ENCODE measurements at regions of chr3 and their contacts with region 1.

Region 1: DNA sequence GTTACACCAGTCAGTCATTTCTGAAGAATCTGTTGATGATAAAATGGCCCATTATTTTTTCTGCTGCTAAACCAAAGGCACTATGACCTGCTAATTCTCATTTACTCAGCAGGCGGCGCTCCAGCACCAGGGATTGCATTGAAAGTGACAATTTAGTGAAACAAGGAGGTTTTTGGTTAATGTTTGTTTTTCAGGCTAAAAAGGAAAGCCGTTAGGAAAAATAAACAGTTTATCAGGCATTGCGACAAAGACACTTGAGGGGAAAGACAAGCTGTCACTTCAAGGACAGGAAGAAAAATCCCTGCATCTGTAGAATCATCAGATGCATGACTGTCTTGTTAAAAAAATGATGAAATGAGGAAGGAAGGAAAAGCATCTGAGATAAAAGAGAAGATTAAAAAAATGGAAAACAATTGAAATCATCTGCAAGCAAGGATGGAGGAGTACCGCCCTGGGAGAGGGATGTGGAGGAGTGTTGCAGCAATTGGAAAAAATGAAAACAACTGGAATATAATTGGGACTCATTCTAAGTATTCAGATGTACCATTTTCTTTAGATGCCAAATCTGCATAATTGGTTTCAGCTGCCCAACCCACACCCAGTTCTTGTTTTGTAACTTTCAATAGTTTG is 54.0 kb downstream of the NR1D2 start:
- DNase-seq: peak; percentile 42
- ATAC-seq: peak; percentile 57; the same call in 1 of the 2 replicates
- H3K4me3 ChIP-seq: no peak overlapping the region
- H3K27ac ChIP-seq: no peak overlapping the region
- H3K4me1 ChIP-seq: peaks cover 7% of the 10 kb centered on the region; the same call in 1 of the 2 replicates
- H3K27me3 ChIP-seq: no peaks in the 10 kb centered on the region; the same call in none of the 2 replicates
- CTCF ChIP-seq: peak; percentile 98
- POLR2A ChIP-seq: peak; percentile 50
- RAD21 ChIP-seq: peak; percentile 100

Region 2: GRCh38 chr3:23888617-23889228 is 110.4 kb before region 1 on chr3:
- CTCF ChIA-PET with region 1: no interaction called
- POLR2A ChIA-PET with region 1: no interaction called
- dilution Hi-C with region 1: no loop called
- in situ Hi-C with region 1: no loop called
- intact Hi-C with region 1: loop called (anchors 1 kb)
- DNase-seq: peak; percentile 64
- ATAC-seq: peak; percentile 74
- H3K4me3 ChIP-seq: no peak overlapping the region
- H3K27ac ChIP-seq: no peak overlapping the region
- H3K4me1 ChIP-seq: no peaks in the 10 kb centered on the region
- H3K27me3 ChIP-seq: no peaks in the 10 kb centered on the region
- CTCF ChIP-seq: peak; percentile 77
- POLR2A ChIP-seq: no peak
- RAD21 ChIP-seq: peak; percentile 83

Region 3: GRCh38 chr3:24185738-24186384 is 186.7 kb after region 1 on chr3:
- CTCF ChIA-PET with region 1: no interaction called
- POLR2A ChIA-PET with region 1: no interaction called
- dilution Hi-C with region 1: no loop called
- in situ Hi-C with region 1: no loop called
- intact Hi-C with region 1: loop called (anchors 1 kb)
- DNase-seq: peak; percentile 57
- ATAC-seq: peak; percentile 81
- H3K4me3 ChIP-seq: no peak overlapping the region
- H3K27ac ChIP-seq: no peak overlapping the region
- H3K4me1 ChIP-seq: no peaks in the 10 kb centered on the region
- H3K27me3 ChIP-seq: peaks cover 5% of the 10 kb centered on the region
- CTCF ChIP-seq: peak; percentile 53
- POLR2A ChIP-seq: no peak
- RAD21 ChIP-seq: peak; percentile 51

Region 4: DNA sequence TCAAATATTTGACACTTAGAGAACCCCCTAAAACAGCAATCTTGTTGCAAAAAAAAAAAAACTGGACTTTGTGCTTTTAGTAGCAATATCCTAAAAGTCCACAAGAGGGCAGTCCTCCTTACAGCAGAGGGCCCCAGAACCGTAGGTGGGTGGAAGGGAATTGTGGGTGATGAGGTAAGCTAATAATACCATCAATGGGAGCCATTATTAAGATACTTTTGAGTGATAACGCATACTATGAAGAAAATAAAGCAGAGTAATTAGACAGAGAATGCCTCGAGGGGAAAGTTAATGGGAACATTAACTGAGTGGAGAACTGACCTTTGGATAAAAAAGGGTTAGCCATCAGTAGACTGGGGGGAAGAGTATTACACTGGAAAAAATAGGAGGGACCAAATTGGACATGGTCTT is 265.6 kb after region 1 on chr3:
- CTCF ChIA-PET with region 1: no interaction called
- POLR2A ChIA-PET with region 1: no interaction called
- dilution Hi-C with region 1: no loop called
- in situ Hi-C with region 1: no loop called
- intact Hi-C with region 1: loop called (anchors 1 kb)
- DNase-seq: peak; percentile 32
- ATAC-seq: peak; percentile 63
- H3K4me3 ChIP-seq: no peak overlapping the region
- H3K27ac ChIP-seq: no peak overlapping the region
- H3K4me1 ChIP-seq: no peaks in the 10 kb centered on the region
- H3K27me3 ChIP-seq: peaks cover 20% of the 10 kb centered on the region
- CTCF ChIP-seq: peak; percentile 65
- POLR2A ChIP-seq: no peak
- RAD21 ChIP-seq: peak; percentile 59